PC-9 (cell line): ENCODE measurements at regions of chr21 and their contacts with region 1.

Region 1: GRCh38 chr21:15483138-15483780 is 246.5 kb upstream of the USP25 start:
- DNase-seq: peak; percentile 55 to 78
- H3K4me3 ChIP-seq: no peak overlapping the region
- H3K27ac ChIP-seq: no peak overlapping the region
- H3K4me1 ChIP-seq: peaks cover 6% of the 10 kb centered on the region; the same call in 1 of the 2 replicates
- H3K27me3 ChIP-seq: no peaks in the 10 kb centered on the region
- CTCF ChIP-seq: peak; percentile 91

Region 2: GRCh38 chr21:14382835-14383594 is 1100.2 kb before region 1 on chr21 and contains the start of gene HSPA13:
- CTCF ChIA-PET with region 1: no interaction called
- POLR2A ChIA-PET with region 1: no interaction called
- intact Hi-C with region 1: loop called (anchors 10 kb)
- DNase-seq: peak; percentile 96 to 98
- H3K4me3 ChIP-seq: peak within 1 kb of the TSS; percentile 96
- H3K27ac ChIP-seq: peak within 1 kb of the TSS; percentile 75
- H3K4me1 ChIP-seq: peaks cover 31% of the 10 kb centered on the region
- H3K27me3 ChIP-seq: no peaks in the 10 kb centered on the region
- CTCF ChIP-seq: no peak
- total RNA-seq, gene HSPA13: 19.0 and 24.9 TPM in 2 replicates

Region 3: DNA sequence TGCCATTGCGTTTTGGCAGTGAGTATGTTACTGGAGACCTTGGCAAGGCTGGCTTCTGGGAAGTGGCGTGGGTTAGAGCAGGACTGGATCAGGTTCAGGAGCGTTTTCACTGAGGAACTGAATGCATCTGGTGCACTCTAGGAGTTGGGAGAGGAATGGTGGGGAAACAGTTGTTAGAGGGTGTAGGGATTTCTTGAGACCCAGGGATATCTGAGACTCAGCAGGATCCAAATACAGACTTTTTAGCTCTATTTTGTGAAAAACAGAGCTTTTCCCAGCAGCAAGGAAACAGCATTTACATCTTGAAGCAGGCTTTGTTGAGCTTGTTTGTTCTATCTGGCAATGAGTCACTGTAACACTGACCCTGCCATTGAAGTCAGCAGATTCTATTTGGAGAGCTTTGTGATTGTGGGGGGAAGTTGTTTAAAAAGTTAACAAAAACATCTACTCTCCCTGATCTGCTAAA is 361.6 kb before region 1 on chr21:
- CTCF ChIA-PET with region 1: interaction called, 21 read pairs
- POLR2A ChIA-PET with region 1: no interaction called
- intact Hi-C with region 1: no loop called
- DNase-seq: no peak
- H3K4me3 ChIP-seq: no peak overlapping the region
- H3K27ac ChIP-seq: no peak overlapping the region
- H3K4me1 ChIP-seq: peaks cover 22% of the 10 kb centered on the region
- H3K27me3 ChIP-seq: no peaks in the 10 kb centered on the region
- CTCF ChIP-seq: no peak

Region 4: DNA sequence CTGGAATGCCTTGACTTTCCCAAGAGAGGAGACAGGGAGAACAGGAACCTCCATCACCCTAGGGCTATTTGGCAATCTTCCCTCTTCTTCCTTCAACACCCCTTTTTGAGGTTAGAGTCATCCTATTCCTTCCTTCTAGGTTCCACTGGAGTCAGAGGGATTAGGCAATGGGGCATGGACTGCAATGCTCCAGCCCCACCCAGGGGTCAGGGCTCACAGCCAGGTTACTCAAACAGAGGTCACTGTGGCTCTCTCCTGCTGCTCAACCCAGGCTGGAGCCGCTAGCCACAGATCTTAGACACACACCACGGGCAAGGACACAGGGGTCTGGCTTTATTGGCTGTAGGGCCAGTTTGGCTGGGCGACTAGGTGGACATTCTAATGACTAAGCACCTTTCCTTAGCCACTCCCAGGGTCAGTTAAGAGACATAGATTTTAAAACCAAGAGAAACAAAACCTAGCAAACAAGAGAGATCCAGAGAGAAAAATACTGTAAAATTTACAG is 273.0 kb before region 1 on chr21:
- CTCF ChIA-PET with region 1: no interaction called
- POLR2A ChIA-PET with region 1: no interaction called
- intact Hi-C with region 1: loop called (anchors 1 kb)
- DNase-seq: peak; percentile 90 to 95
- H3K4me3 ChIP-seq: 0 out of 2 replicates have a peak overlapping the region, but pooled peaks have one; percentile 26
- H3K27ac ChIP-seq: peak overlapping the region; percentile 83
- H3K4me1 ChIP-seq: peaks cover 44% of the 10 kb centered on the region
- H3K27me3 ChIP-seq: no peaks in the 10 kb centered on the region
- CTCF ChIP-seq: no peak

Region 5: GRCh38 chr21:15272591-15272990 is 210.7 kb before region 1 on chr21:
- CTCF ChIA-PET with region 1: no interaction called
- POLR2A ChIA-PET with region 1: no interaction called
- intact Hi-C with region 1: loop called (anchors 2 kb)
- DNase-seq: peak in 1 of 2 experiments; percentile 10
- H3K4me3 ChIP-seq: no peak overlapping the region
- H3K27ac ChIP-seq: peak overlapping the region; percentile 45
- H3K4me1 ChIP-seq: peaks cover 40% of the 10 kb centered on the region
- H3K27me3 ChIP-seq: no peaks in the 10 kb centered on the region
- CTCF ChIP-seq: no peak

Region 6: DNA sequence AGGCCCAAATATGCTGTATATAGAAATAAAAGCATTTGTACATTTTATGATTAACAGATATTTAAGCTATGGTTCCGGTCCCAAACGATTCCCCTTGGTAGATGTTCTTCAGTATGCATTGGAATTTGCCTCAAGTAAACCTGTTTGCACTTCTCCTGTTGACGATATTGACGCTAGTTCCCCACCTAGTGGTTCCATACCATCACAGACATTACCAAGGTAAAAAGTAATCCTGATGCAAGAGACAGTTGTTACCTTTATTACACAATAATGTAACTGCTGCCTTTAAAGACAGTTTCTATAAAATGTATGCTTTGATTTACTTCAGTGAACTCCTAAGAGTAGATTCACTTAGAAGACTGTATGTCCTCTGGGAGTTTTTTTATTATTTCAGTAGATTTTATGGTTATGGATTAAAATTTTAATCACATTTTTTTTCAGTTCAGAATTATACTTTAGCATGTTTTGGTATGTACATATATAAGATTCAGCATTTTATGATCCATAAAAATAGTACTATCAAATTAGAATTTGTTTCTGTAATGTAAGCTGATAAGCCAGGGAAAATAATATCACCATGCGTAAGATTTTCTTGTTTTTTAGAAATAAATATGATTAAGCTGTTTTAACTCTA is 343.0 kb after region 1 on chr21:
- CTCF ChIA-PET with region 1: no interaction called
- POLR2A ChIA-PET with region 1: no interaction called
- intact Hi-C with region 1: loop called (anchors 5 kb)
- DNase-seq: peak in 1 of 2 experiments; percentile 34
- H3K4me3 ChIP-seq: no peak overlapping the region
- H3K27ac ChIP-seq: peak overlapping the region; percentile 20; the same call in 1 of the 2 replicates
- H3K4me1 ChIP-seq: peaks cover 6% of the 10 kb centered on the region; the same call in 1 of the 2 replicates
- H3K27me3 ChIP-seq: no peaks in the 10 kb centered on the region
- CTCF ChIP-seq: peak; percentile 64